WTC11 (cell line): ENCODE measurements at regions of chr1 and their contacts with region 1.

Region 1: DNA sequence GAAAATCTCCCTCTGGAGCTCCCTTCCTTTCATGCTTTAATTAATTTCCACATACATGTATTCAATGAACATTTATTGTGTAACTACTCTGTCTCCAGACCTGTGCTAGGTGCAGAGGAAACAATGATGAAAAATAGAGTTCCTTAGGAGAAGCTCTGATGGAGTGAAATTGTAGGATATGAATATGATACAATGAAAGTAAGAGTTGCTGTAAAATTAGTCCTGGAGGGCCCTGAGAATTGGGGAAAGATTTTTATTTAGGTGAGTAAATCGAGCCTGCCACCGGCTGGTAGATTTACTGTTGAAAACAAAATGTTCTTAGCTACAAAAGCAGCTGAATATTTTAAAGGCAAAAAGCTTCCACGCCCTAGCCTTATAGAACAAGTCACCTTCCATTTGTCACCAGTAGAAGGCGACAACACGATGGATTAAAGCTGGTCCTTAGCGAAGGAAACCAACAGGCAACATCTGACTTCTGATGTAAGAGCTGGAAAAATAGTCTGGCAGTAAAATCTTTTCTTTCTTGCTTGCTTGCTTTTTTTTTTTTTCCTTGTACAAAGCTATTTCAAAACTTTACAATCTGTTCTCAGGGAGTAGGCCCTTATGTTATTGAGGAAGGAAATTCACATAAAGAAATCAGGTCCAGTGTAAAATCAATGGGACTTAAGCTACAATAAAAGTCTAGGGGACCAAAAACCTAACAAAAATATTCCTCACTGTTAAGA is 82.0 kb upstream of the ROR1 start:
- DNase-seq: peak; percentile 41
- ATAC-seq: peak; percentile 93
- H3K4me3 Mint-ChIP-seq: no peak overlapping the region
- H3K27ac Mint-ChIP-seq: no peak overlapping the region
- H3K4me1 Mint-ChIP-seq: peaks cover 7% of the 10 kb centered on the region; the same call in 1 of the 2 replicates
- H3K27me3 Mint-ChIP-seq: no peaks in the 10 kb centered on the region
- CTCF ChIP-seq: 0 out of 2 replicates have a peak, but pooled peaks have one; percentile 47

Region 2: GRCh38 chr1:63522891-63523728 is 168.8 kb before region 1 on chr1 and contains the starts of genes EFCAB7 and ITGB3BP:
- CTCF ChIA-PET with region 1: no interaction called
- POLR2A ChIA-PET with region 1: no interaction called
- DNase-seq: peak; percentile 85
- ATAC-seq: peak; percentile 99
- H3K4me3 Mint-ChIP-seq: peak within 1 kb of the TSS; percentile 95
- H3K27ac Mint-ChIP-seq: peak within 1 kb of the TSS; percentile 97
- H3K4me1 Mint-ChIP-seq: peaks cover 15% of the 10 kb centered on the region
- H3K27me3 Mint-ChIP-seq: no peaks in the 10 kb centered on the region
- CTCF ChIP-seq: no peak
- total RNA-seq, gene EFCAB7: 2.3 to 4.3 TPM (median 2.8 TPM) in 3 replicates
- total RNA-seq, gene ITGB3BP: 47.2 to 51.7 TPM (median 50.2 TPM) in 3 replicates

Region 3: GRCh38 chr1:63624911-63625310 is 67.0 kb before region 1 on chr1:
- CTCF ChIA-PET with region 1: interaction called, 10 read pairs
- POLR2A ChIA-PET with region 1: no interaction called
- DNase-seq: no peak
- ATAC-seq: no peak
- H3K4me3 Mint-ChIP-seq: no peak overlapping the region
- H3K27ac Mint-ChIP-seq: no peak overlapping the region
- H3K4me1 Mint-ChIP-seq: peaks cover 36% of the 10 kb centered on the region
- H3K27me3 Mint-ChIP-seq: no peaks in the 10 kb centered on the region
- CTCF ChIP-seq: no peak

Region 4: GRCh38 chr1:63730211-63730610 is 38.3 kb after region 1 on chr1:
- CTCF ChIA-PET with region 1: interaction called, 21 read pairs
- POLR2A ChIA-PET with region 1: no interaction called
- DNase-seq: no peak
- ATAC-seq: peak; percentile 19; the same call in 1 of the 2 replicates
- H3K4me3 Mint-ChIP-seq: no peak overlapping the region
- H3K27ac Mint-ChIP-seq: peak overlapping the region; percentile 47
- H3K4me1 Mint-ChIP-seq: peaks cover 42% of the 10 kb centered on the region
- H3K27me3 Mint-ChIP-seq: peaks cover 5% of the 10 kb centered on the region; the same call in 1 of the 2 replicates
- CTCF ChIP-seq: no peak

Region 5: DNA sequence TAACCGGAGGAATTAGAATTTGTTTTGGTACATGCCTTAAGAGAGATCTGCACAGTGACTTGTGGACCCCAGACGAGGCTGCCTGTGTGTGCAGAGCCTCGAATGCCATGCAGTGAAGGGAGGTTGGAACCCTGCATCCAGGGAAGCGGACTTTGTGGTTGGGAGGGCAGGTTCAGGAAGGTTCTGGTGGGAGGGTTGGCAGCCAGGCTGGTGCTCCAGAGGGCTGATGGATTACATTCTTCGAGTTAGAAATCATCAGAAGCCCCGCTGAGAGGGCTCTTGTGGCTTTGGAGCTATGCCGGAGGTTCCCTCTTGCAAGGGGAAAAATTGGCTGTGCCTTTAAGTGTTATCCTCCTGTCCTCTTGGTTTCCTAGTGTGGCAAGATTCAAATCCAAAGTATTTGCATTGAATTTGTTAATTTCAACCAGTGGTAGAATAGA is 103.1 kb after region 1 on chr1:
- CTCF ChIA-PET with region 1: interaction called, 22 read pairs
- POLR2A ChIA-PET with region 1: interaction called, 5 read pairs
- DNase-seq: peak; percentile 42
- ATAC-seq: peak; percentile 51
- H3K4me3 Mint-ChIP-seq: peak overlapping the region; percentile 39
- H3K27ac Mint-ChIP-seq: peak overlapping the region; percentile 98
- H3K4me1 Mint-ChIP-seq: peaks cover 98% of the 10 kb centered on the region
- H3K27me3 Mint-ChIP-seq: no peaks in the 10 kb centered on the region
- CTCF ChIP-seq: no peak

Region 6: GRCh38 chr1:63906047-63906704 is 214.3 kb after region 1 on chr1:
- CTCF ChIA-PET with region 1: interaction called, 12 read pairs
- POLR2A ChIA-PET with region 1: no interaction called
- DNase-seq: no peak
- ATAC-seq: peak; percentile 46
- H3K4me3 Mint-ChIP-seq: peak overlapping the region; percentile 11
- H3K27ac Mint-ChIP-seq: peak overlapping the region; percentile 75
- H3K4me1 Mint-ChIP-seq: peaks cover 81% of the 10 kb centered on the region
- H3K27me3 Mint-ChIP-seq: no peaks in the 10 kb centered on the region
- CTCF ChIP-seq: no peak

Region 7: GRCh38 chr1:64163970-64164369 is 472.1 kb after region 1 on chr1:
- CTCF ChIA-PET with region 1: interaction called, 29 read pairs
- POLR2A ChIA-PET with region 1: no interaction called
- DNase-seq: no peak
- ATAC-seq: peak; percentile 75
- H3K4me3 Mint-ChIP-seq: no peak overlapping the region
- H3K27ac Mint-ChIP-seq: 0 out of 2 replicates have a peak overlapping the region, but pooled peaks have one; percentile 1
- H3K4me1 Mint-ChIP-seq: no peaks in the 10 kb centered on the region
- H3K27me3 Mint-ChIP-seq: no peaks in the 10 kb centered on the region
- CTCF ChIP-seq: no peak